Ascending aorta (tissue), 2 donors: ENCODE measurements at regions of chr1 and their contacts with region 1.

Region 1: DNA sequence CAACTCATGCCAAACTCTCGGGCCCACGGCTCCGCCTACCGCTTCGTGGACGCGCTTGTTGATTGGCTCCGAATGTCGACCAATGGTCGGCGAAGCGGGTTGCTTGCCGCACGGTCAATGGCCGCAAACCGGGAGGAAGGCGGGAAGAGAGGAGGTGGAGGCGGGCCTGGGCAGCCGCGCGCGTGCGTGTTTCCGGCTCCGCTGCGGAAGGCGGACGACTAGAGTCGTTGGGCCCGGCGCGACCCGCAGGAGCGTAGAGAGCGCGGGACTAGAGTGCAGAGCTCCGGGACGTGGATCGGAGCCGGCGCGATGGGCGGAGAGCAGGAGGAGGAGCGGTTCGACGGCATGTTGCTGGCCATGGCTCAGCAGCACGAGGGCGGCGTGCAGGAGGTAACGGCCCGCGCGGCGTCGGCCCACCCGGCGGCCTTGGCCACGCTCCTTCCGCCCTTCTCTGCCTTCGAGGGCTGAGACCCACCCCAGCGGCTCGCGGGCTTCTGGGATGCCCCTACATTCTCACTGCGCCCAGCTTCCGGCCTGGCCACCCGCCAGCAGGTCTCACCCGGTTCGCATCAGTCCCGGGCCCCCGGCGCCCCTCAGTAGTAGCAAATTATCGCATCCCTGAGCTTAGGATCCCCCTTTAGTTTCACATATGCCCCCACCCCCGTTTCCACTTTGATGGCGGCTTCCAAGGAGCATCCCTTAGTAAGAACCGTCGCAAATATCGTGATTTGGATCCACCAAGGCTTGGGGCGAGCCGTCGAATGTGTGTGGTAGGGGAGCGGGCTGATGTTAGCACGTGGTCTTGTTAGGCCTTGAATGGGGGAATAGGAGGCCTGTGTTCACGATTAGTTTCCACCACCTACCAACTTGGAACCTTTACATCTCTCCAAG is at the start of gene NUDC:
- DNase-seq: peak; percentile 82 to 98
- H3K4me3 ChIP-seq: peak within 1 kb of the TSS; percentile 77 to 85
- H3K27ac ChIP-seq: peak within 1 kb of the TSS; percentile 85 to 93
- H3K4me1 ChIP-seq: peaks cover 7 to 18% of the 10 kb centered on the region in 2 donors
- H3K27me3 ChIP-seq: no peaks in the 10 kb centered on the region
- CTCF ChIP-seq: no peak
- total RNA-seq, gene NUDC: 19.2 TPM

Region 2: GRCh38 chr1:26900001-26900814 is 21.6 kb before region 1 on chr1 and contains the start of gene GPATCH3:
- intact Hi-C with region 1: loop called (anchors 1 kb)
- DNase-seq: peak; percentile 57 to 96
- H3K4me3 ChIP-seq: peak within 1 kb of the TSS; percentile 66 to 95
- H3K27ac ChIP-seq: peak within 1 kb of the TSS; percentile 67 to 87
- H3K4me1 ChIP-seq: peaks cover 6 to 15% of the 10 kb centered on the region in 2 donors
- H3K27me3 ChIP-seq: no peaks in the 10 kb centered on the region
- CTCF ChIP-seq: no peak
- total RNA-seq, gene GPATCH3: 2.0 TPM

Region 3: GRCh38 chr1:26993237-26994019 is 71.6 kb after region 1 on chr1 and contains the start of gene TRNP1:
- intact Hi-C with region 1: loop called (anchors 5 kb)
- DNase-seq: peak in 1 of 2 donors; percentile 79
- H3K4me3 ChIP-seq: peak within 1 kb of the TSS; percentile 92 to 99
- H3K27ac ChIP-seq: peak within 1 kb of the TSS; percentile 73
- H3K4me1 ChIP-seq: peaks cover 14 to 23% of the 10 kb centered on the region in 2 donors
- H3K27me3 ChIP-seq: no peaks in the 10 kb centered on the region
- CTCF ChIP-seq: no peak
- total RNA-seq, gene TRNP1: 37.6 TPM